ENCODE measurements at regions of chrX and their contacts with region 1.

Region 1: GRCh38 chrX:120499301-120500072 is 30.4 kb upstream of the LAMP2 start:
- DNase-seq: no peak
- ATAC-seq: no peak
- H3K4me3 Mint-ChIP-seq: no peak overlapping the region
- H3K27ac Mint-ChIP-seq: no peak overlapping the region
- H3K4me1 Mint-ChIP-seq: peaks cover 2% of the 10 kb centered on the region
- H3K27me3 Mint-ChIP-seq: no peaks in the 10 kb centered on the region
- CTCF ChIP-seq: no peak

Region 2: DNA sequence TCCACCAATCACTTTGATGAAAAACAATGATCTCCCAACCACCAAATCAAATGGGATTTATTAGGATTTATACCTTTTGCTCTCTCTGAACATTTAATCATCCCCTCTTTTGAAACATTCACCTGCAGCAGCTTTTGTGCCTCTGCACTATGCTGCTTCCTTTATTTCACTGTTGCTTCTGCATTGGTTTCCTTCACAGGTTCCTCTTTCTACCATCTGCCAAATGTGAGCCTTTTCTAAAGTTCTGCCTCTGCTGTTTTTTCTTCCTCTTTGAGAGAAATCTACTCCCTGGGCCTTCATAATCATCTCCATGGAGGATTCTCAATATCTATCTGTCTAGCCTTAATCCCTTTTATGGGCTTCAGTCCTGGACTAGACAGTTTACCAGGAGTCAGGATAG is 36.6 kb after region 1 on chrX:
- CTCF ChIA-PET with region 1: no interaction called
- POLR2A ChIA-PET with region 1: no interaction called
- intact Hi-C with region 1: no loop called
- DNase-seq: no peak
- ATAC-seq: no peak
- H3K4me3 Mint-ChIP-seq: no peak overlapping the region
- H3K27ac Mint-ChIP-seq: no peak overlapping the region
- H3K4me1 Mint-ChIP-seq: no peaks in the 10 kb centered on the region
- H3K27me3 Mint-ChIP-seq: no peaks in the 10 kb centered on the region
- CTCF ChIP-seq: no peak

Region 3: DNA sequence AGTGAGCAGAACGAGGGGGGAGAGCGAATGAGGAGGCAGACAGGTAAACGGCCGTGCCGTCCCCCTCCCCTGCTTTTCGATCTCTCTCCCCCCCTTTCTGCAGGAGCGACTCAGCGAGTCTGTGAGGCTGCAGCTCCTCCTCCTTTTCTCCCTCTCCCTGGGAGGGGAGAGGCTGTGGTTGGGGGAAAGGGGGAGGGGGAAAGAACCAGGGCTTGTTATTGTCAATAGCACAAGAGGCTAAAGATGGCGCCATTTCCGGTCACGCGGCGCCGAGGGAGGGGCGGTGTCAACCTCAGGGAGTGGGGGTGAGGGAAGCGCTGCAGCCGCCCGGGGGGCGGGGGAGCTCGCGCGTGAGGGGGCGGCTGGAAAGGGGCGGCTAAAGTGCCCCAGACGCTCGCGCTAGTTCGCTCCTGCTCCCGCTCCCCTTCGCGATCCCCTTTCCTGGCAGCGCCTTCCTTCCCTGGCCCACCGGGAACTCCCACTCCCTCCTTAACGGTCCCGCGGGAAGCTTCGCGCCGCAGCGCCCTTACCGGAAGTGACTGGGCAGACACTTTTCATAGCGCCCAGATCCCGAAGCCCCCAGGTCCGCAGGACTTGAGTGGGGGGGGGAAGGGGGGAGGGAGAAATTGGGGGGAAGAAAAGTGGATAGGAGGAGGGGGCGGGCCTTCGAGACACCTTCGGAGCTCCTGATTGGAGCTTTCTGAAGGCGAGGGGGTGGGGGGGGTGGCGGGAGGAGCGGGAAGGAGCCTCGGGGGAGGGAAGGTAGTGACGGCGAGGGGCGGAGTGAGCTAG is 61.6 kb after region 1 on chrX and contains the start of gene CUL4B:
- CTCF ChIA-PET with region 1: no interaction called
- POLR2A ChIA-PET with region 1: no interaction called
- intact Hi-C with region 1: loop called (anchors 5 kb)
- DNase-seq: peak; percentile 95
- ATAC-seq: peak; percentile 90
- H3K4me3 Mint-ChIP-seq: peak within 1 kb of the TSS; percentile 98
- H3K27ac Mint-ChIP-seq: peak within 1 kb of the TSS; percentile 98
- H3K4me1 Mint-ChIP-seq: peaks cover 21% of the 10 kb centered on the region
- H3K27me3 Mint-ChIP-seq: no peaks in the 10 kb centered on the region
- CTCF ChIP-seq: no peak
- total RNA-seq, gene CUL4B: 39.1 to 39.8 TPM

Region 4: GRCh38 chrX:120664081-120664480 is 164.6 kb after region 1 on chrX:
- CTCF ChIA-PET with region 1: interaction called, 8 read pairs
- POLR2A ChIA-PET with region 1: no interaction called
- intact Hi-C with region 1: loop called (anchors 10 kb)
- DNase-seq: no peak
- ATAC-seq: no peak
- H3K4me3 Mint-ChIP-seq: no peak overlapping the region
- H3K27ac Mint-ChIP-seq: no peak overlapping the region
- H3K4me1 Mint-ChIP-seq: peaks cover 3% of the 10 kb centered on the region
- H3K27me3 Mint-ChIP-seq: no peaks in the 10 kb centered on the region
- CTCF ChIP-seq: no peak

Region 5: DNA sequence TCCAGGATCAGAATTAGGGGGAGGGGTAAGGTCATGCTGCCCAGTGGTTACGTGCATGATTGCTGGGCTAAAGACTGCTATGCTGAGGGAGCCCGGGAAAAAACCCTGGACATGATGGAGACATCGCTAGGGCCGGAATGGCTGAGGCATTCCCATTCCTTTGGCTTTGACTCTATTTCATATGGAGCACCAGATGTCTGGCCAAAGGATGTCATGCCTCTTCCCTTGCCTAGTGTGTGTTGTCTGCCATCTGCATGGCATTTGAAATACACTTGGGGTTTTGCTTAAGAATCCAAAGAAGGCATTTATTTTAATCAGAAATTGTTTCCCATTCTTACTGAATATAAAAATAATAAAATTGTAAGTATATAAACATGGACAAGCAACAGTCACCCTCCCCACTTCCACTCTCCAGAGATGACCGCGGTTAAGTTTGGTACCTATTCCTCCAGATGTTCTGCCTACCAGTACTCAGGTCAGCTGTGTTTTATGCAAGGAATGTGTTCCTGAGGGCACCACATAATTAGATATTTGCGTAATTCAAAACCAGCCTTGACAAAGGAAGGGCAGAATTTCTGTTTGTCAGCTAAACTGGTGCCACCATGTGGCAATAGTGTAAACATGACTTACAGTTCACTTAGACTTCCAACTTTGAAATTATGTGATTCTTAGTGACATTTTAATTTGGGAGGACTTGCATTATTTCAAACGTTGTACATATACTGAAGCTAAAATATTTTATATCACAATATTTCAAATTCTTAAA is 270.3 kb after region 1 on chrX:
- CTCF ChIA-PET with region 1: interaction called, 3 read pairs
- POLR2A ChIA-PET with region 1: no interaction called
- intact Hi-C with region 1: loop called (anchors 5 kb)
- DNase-seq: peak; percentile 6
- ATAC-seq: no peak
- H3K4me3 Mint-ChIP-seq: no peak overlapping the region
- H3K27ac Mint-ChIP-seq: no peak overlapping the region
- H3K4me1 Mint-ChIP-seq: no peaks in the 10 kb centered on the region
- H3K27me3 Mint-ChIP-seq: no peaks in the 10 kb centered on the region
- CTCF ChIP-seq: no peak

Measured in activated CD8-positive, alpha-beta T cell treated with anti-CD3 and anti-CD28 coated beads for 36 hours (primary cell).